ENCODE measurements at regions of chr5 and their contacts with region 1.

Region 1: DNA sequence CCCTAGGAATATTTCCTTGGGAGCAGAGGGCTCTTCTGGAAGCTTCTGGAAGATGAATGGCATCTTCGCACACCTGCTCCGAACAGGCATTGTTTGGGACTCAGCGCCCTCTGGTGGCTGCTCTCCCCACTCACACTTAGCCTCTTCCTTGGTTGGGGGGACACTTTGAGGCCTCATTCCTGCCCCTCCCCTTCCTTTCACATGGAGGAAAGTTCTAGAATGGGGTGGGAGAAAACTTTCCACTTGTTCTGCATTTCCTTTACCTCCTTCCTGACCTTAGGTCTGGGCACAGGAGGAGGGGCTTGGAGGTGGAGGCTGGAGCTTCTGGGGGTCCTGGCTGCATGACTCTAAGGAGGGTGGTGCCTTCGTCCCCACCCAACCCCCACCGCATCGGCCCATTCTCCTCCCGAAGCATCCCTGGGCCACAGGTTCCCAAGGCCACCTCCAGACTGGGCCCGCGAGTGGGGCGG is 19.3 kb upstream of the SMIM32 start:
- DNase-seq: peak in 1 of 2 donors; percentile 50
- H3K4me3 ChIP-seq: no peak overlapping the region
- H3K27ac ChIP-seq: no peak overlapping the region
- H3K4me1 ChIP-seq: no peaks in the 10 kb centered on the region
- H3K27me3 ChIP-seq: peaks cover 0 to 18% of the 10 kb centered on the region in 2 donors
- CTCF ChIP-seq: peak; percentile 81 to 83

Region 2: GRCh38 chr5:135887351-135887864 is 324.9 kb before region 1 on chr5:
- intact Hi-C with region 1: loop called (anchors 2 kb)
- DNase-seq: no peak
- H3K4me3 ChIP-seq: no peak overlapping the region
- H3K27ac ChIP-seq: no peak overlapping the region
- H3K4me1 ChIP-seq: peaks cover 0 to 3% (median 0%) of the 10 kb centered on the region in 4 donors
- H3K27me3 ChIP-seq: peaks cover 0 to 22% of the 10 kb centered on the region in 2 donors
- CTCF ChIP-seq: peak; percentile 77 to 80

Region 3: DNA sequence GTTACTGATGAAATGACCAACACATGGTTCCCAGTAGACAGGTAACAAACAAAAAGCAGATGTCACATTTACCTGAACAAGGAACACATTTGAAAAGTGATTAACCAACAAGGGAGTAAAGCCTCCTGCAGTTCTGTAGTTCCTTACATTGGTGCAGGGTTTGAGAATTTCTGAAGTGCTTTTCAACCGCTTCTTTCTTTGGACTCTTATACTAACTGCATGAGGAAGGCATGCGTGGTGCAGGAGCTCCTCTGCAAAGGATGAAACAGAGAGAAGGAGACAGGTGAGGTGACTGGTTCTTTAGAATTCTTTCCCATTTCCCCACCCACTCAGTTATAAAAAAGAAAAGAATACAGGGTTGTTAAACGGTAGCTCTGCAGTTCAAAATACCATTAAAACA is 312.0 kb before region 1 on chr5:
- intact Hi-C with region 1: no loop called
- DNase-seq: no peak
- H3K4me3 ChIP-seq: no peak overlapping the region
- H3K27ac ChIP-seq: no peak overlapping the region
- H3K4me1 ChIP-seq: no peaks in the 10 kb centered on the region
- H3K27me3 ChIP-seq: peaks cover 0 to 25% of the 10 kb centered on the region in 2 donors
- CTCF ChIP-seq: no peak

Measured in tibial artery (tissue), 4 donors.